Activated naive CD4-positive, alpha-beta T cell treated with anti-CD3 and anti-CD28 coated beads, Interleukin-2, amount 10 ng/mL, durations not matched to agents 7 days and 5 days (primary cell): ENCODE measurements at regions of chr1 and their contacts with region 1.

Region 1: GRCh38 chr1:172745014-172745413 is 86.1 kb downstream of the FASLG start:
- DNase-seq: peak; percentile 55
- H3K4me3 Mint-ChIP-seq: no peak overlapping the region
- H3K27ac Mint-ChIP-seq: no peak overlapping the region
- H3K4me1 Mint-ChIP-seq: peaks cover 41% of the 10 kb centered on the region
- H3K27me3 Mint-ChIP-seq: peaks cover 49% of the 10 kb centered on the region

Region 2: DNA sequence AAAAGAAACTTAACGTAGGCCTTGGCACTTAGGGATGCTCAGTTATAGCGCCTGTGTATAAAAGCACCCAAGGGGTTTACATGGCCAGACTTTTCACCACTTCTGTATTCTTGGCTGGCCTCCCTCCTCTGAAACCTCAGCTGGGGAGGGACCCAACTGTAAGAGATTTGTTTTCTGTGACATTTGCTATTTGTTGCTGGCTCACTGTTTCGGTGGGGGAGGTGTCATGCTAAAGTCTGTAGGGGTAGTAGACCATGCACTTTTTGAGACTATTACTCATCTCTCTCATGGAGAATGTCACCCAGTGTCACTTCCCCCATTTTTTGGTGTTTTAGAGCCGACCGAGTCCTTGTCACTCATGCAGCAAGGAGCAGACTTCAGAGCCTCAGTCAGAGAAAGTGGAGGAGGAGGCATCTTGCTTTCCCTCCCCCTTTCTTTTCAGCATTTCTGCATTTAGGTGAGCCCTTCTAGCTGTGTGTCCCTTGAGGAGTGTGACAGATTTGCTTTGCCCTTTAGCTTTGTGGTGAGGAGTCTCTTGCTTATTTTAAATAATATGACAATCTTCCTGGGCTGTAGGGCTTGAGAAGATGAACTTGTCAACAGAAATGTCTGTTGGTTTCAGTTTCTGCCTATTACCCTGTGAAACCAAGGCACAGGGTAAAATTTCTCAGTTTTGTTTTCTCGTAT is 74.0 kb after region 1 on chr1:
- CTCF ChIA-PET with region 1: interaction called, 39 read pairs
- DNase-seq: peak; percentile 60
- H3K4me3 Mint-ChIP-seq: peak overlapping the region; percentile 24
- H3K27ac Mint-ChIP-seq: peak overlapping the region; percentile 93
- H3K4me1 Mint-ChIP-seq: peaks cover 37% of the 10 kb centered on the region
- H3K27me3 Mint-ChIP-seq: no peaks in the 10 kb centered on the region

Region 3: GRCh38 chr1:172895050-172895460 is 150.0 kb after region 1 on chr1:
- CTCF ChIA-PET with region 1: interaction called, 17 read pairs
- DNase-seq: peak; percentile 44
- H3K4me3 Mint-ChIP-seq: peak overlapping the region; percentile 39
- H3K27ac Mint-ChIP-seq: peak overlapping the region; percentile 92
- H3K4me1 Mint-ChIP-seq: peaks cover 37% of the 10 kb centered on the region
- H3K27me3 Mint-ChIP-seq: peaks cover 15% of the 10 kb centered on the region

Region 4: GRCh38 chr1:173420330-173420806 is 675.4 kb after region 1 on chr1:
- CTCF ChIA-PET with region 1: interaction called, 10 read pairs
- DNase-seq: peak; percentile 68
- H3K4me3 Mint-ChIP-seq: no peak overlapping the region
- H3K27ac Mint-ChIP-seq: no peak overlapping the region
- H3K4me1 Mint-ChIP-seq: peaks cover 7% of the 10 kb centered on the region
- H3K27me3 Mint-ChIP-seq: no peaks in the 10 kb centered on the region